ENCODE measurements at regions of chr2 and their contacts with region 1.

Region 1: GRCh38 chr2:201171259-201171814 is 11.6 kb upstream of the CASP10 start:
- DNase-seq: no peak
- H3K4me3 ChIP-seq: no peak overlapping the region
- H3K27ac ChIP-seq: no peak overlapping the region
- H3K4me1 ChIP-seq: no peaks in the 10 kb centered on the region
- H3K27me3 ChIP-seq: no peaks in the 10 kb centered on the region
- CTCF ChIP-seq: no peak

Region 2: DNA sequence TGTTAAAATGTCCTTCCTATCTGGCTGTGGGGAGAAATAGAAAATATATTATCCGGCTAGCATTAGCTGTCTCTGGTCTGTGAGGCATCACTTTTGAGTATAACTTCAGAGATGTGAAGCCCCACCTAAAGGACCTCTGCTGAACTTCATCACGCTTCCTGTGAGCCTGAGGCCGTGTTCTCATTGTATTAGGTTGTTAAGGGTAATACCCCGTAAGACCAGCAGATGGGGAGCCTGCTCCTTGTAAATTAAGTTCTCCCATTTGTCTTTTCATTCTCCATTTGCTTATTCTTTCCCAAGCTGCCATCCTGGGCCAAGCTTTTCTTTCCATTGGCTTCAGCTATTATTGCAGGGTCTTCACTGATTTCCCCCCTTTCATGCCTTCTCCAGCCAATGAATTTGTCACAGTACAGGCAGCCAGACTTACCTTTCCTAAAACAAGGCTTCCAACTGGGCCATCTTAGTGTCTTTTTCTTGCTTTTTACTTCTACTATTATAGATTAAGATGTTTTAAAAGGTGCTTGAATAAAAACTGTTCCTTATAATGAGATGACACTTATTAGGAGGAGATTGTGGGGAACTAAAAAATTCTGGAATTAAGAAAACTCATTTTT is 269.8 kb before region 1 on chr2:
- intact Hi-C with region 1: loop called (anchors 2 kb)
- DNase-seq: peak in 1 of 2 donors; percentile 79
- H3K4me3 ChIP-seq: no peak overlapping the region
- H3K27ac ChIP-seq: no peak overlapping the region
- H3K4me1 ChIP-seq: no peaks in the 10 kb centered on the region
- H3K27me3 ChIP-seq: no peaks in the 10 kb centered on the region
- CTCF ChIP-seq: peak; percentile 62 to 65 (median 65)

Region 3: GRCh38 chr2:200963124-200963917 is 208.0 kb before region 1 on chr2 and contains the start of gene ORC2:
- intact Hi-C with region 1: loop called (anchors 10 kb)
- DNase-seq: peak; percentile 78 to 97
- H3K4me3 ChIP-seq: peak within 1 kb of the TSS; percentile 85 to 86
- H3K27ac ChIP-seq: peak within 1 kb of the TSS; percentile 71 to 82
- H3K4me1 ChIP-seq: peaks cover 0 to 8% of the 10 kb centered on the region in 2 donors
- H3K27me3 ChIP-seq: no peaks in the 10 kb centered on the region
- CTCF ChIP-seq: peak; percentile 44 to 73 (median 50)
- total RNA-seq, gene ORC2: 5.2 TPM